Cardiac septum (tissue), 1 donor: ENCODE measurements at regions of chr3 and their contacts with region 1.

Region 1: DNA sequence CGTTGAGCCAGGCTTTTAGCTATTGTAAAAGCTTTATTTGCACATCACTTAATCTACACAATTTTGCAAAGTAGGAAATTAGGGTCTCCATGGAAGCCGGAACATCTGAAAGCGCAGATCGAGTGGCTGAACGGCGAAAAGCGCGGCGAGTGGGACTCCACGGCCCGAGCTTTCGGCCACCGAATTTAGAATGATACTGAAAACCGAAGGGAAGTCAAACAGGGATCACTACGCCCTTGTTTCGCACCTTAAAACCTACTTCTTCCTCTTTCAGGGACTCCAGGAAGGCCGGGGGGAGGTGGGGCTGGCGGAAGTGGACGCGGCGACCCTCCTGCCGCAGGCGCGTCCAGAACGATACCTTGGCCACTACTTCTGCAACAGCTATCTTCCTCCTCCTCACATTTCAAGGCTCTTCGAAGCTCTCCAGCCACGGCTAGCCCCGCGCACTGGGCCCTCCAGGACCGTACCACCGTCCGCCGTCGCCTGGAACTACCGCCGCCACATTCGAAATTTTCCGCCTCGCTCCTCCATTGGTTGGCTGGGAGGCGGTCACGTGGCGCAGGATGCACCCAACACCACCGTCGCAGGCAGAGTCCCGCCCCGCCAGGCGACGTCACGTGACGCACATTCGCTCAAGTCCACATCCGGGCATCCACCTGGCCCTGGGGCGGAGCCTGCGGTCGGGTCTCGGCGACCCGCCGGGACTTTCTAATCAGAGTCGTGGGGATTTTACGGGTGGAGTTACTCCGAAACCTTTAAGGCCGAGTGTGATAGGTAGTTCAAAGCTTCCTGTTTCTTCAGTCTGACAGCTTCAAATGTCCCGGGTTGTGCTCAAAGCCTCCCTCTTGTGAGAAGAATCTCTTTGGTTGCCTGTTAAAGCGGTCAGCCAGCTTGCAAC is at the start of gene SGO1:
- DNase-seq: peak; percentile 99
- total RNA-seq, gene SGO1: 0.38 TPM

Region 2: GRCh38 chr3:19946832-19947548 is 239.0 kb before region 1 on chr3 and contains the start of gene RAB5A:
- intact Hi-C with region 1: loop called (anchors 1 kb)
- DNase-seq: peak; percentile 99
- total RNA-seq, gene RAB5A: 66.0 TPM

Region 3: GRCh38 chr3:20141851-20142250 is 44.1 kb before region 1 on chr3:
- intact Hi-C with region 1: loop called (anchors 5 kb)
- DNase-seq: no peak